ENCODE measurements at regions of chr3 and their contacts with region 1.

Region 1: GRCh38 chr3:196726788-196727675 is 12.6 kb upstream of the PAK2 start:
- DNase-seq: peak; percentile 19 to 86
- H3K4me3 ChIP-seq: no peak overlapping the region
- H3K27ac ChIP-seq: peak overlapping the region; percentile 62
- H3K4me1 ChIP-seq: peaks cover 36% of the 10 kb centered on the region
- H3K27me3 ChIP-seq: no peaks in the 10 kb centered on the region
- CTCF ChIP-seq: no peak

Region 2: GRCh38 chr3:196585044-196585757 is 141.8 kb before region 1 on chr3:
- CTCF ChIA-PET with region 1: interaction called, 12 read pairs
- POLR2A ChIA-PET with region 1: no interaction called
- intact Hi-C with region 1: no loop called
- DNase-seq: peak in 1 of 2 experiments; percentile 9
- H3K4me3 ChIP-seq: no peak overlapping the region
- H3K27ac ChIP-seq: no peak overlapping the region
- H3K4me1 ChIP-seq: no peaks in the 10 kb centered on the region
- H3K27me3 ChIP-seq: no peaks in the 10 kb centered on the region
- CTCF ChIP-seq: no peak

Region 3: DNA sequence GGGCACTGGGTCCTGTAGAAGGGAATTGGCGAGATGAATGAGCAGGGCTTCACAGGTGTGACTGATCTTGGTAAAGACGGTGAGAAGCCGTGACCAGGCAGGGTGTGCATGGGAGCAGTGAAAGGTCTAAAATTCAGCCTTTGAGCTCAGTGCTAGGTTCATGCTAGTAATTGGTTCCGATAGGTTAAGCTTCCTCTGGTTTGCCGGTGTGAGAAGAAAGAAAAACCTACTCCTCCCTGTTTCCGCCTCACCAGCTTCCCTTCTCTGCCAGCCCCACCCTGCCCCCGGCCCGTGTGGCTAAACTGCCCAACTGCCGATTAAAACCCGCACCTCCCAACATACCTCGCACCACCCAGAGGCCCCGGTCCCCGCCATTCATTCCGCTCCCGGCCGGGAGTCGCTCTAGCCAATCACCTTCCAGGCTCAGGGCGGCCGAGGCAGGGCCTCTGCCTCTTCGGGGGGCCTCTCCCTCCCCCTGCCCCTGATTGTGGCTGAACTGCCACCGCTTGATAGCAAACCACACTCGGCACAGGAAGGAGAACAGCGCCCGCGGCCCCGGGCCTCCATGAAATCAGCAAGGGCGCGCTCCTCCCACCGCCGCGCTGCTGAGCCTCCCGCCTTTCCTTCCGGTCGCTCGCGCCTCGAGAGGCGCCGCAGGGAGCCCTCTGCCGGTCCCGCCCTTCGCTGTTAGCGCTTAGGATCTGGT is 94.8 kb before region 1 on chr3:
- CTCF ChIA-PET with region 1: interaction called, 11 read pairs
- POLR2A ChIA-PET with region 1: no interaction called
- intact Hi-C with region 1: no loop called
- DNase-seq: peak; percentile 75 to 90
- H3K4me3 ChIP-seq: peak overlapping the region; percentile 66
- H3K27ac ChIP-seq: peak overlapping the region; percentile 66
- H3K4me1 ChIP-seq: peaks cover 15% of the 10 kb centered on the region
- H3K27me3 ChIP-seq: no peaks in the 10 kb centered on the region
- CTCF ChIP-seq: peak; percentile 47

Measured in PC-9 (cell line).